ENCODE measurements at regions of chr17 and their contacts with region 1.

Region 1: GRCh38 chr17:41688699-41689496 is at the start of gene EIF1:
- DNase-seq: peak; percentile 99

Region 2: DNA sequence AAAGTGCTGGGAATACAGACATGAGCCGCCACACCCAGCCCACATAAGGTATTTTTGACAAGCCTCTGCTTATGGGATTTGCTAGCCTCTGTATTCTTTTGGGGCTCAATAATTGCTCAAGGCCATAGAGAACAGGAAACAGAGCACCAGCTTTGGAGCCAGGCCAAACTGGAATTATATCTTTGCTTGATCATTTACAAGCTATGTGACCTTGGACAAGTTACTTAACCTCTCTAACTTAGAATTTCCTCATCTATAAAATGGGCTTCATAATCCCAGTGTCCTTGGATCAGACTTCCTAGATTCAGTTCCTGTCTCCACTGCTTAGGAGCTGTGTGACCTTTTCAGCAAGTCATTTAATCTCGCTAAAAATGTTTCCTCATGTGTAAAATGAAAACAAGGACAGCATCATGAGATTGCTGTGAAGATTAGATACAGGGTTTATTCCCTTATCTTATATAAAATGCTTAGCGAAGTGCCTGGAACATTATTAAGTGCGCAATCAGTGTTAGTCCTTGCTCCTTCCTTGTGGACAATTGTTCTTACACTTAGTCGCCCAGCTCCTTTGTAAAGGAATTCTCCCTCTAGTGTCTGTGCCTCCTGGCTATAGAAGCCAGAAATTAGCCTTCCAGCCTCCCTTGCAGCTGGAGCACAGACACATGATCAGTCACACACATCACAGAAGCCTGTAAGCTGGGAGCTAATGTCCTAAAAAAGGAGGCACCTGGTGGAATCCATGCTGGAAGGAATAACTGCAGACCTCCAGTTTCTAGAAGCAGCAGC is 133.6 kb before region 1 on chr17:
- CTCF ChIA-PET with region 1: no interaction called
- POLR2A ChIA-PET with region 1: no interaction called
- DNase-seq: no peak

Region 3: DNA sequence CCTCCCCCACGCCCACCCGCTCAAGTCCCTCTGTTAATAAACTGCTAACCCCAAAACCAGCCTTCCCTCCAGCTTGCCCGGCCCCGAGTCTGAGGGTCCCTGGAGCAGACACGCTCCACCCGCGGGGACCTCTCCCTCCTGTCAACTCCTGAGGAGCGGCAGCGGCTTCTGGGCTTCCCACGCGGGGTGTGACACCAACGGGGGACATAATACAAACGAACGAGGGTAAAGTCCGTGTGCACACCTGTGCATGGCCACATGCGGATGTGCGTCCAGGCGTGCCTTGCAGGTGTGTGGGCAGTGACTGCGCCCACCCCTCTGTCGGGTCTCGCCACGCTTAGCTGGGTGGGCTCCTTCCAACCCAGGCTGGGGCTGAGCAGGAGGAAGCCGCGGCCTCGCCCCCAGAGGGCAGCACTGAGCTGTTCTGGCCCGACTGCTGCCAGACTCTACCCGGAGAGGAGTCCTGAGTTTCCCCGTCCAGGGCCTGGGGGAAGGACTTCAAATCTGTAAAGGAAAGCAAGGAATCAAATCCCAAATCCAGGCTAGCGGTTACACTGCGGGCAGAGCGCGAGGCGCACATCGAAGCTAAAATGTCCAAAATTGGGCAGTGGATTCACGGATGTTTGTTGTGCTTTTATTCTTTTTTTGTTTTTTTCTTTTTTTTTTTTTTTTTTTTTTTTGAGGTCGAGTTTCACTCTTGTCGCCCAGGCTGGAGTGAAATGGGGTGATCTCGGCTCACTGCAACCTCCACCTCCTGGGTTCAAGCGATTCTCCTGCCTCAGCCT is 40.3 kb before region 1 on chr17:
- CTCF ChIA-PET with region 1: interaction called, 5 read pairs
- POLR2A ChIA-PET with region 1: interaction called, 28 read pairs
- DNase-seq: peak; percentile 88

Region 4: DNA sequence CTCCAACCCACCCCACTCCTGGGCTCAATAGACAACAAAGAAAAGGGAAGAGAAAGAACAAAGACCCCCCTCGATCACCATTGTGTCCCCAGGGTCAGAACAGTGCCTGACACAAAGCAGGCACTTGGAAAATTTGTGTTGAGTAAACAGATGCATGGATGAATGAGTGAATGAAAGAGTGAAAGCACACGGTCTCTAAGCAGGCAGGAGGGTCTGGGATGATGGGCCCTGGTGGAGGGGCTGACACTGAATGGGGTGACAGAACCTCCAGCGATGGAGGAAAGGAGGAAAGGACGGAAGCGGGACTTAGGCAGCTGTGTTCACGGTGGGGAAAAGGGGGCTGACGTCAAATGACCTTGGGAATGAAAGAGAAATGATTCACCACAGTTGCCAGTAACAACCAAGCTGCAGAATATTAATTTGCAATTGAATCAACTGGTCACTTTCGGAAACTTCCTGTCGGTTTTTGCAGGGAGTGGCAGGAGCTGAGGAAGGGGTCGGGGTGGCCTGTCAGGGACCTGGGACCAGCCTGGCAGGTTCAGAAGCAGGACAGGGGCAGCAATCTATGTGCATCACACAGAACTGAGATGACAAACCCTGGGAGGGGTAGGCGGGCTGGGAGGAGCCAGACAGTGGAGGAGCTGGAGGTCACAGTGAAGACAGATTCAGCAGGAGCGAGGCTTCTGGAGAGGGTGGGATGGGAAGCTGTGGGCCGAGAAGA is 16.5 kb after region 1 on chr17:
- CTCF ChIA-PET with region 1: interaction called, 13 read pairs
- POLR2A ChIA-PET with region 1: interaction called, 199 read pairs
- DNase-seq: no peak

Region 5: DNA sequence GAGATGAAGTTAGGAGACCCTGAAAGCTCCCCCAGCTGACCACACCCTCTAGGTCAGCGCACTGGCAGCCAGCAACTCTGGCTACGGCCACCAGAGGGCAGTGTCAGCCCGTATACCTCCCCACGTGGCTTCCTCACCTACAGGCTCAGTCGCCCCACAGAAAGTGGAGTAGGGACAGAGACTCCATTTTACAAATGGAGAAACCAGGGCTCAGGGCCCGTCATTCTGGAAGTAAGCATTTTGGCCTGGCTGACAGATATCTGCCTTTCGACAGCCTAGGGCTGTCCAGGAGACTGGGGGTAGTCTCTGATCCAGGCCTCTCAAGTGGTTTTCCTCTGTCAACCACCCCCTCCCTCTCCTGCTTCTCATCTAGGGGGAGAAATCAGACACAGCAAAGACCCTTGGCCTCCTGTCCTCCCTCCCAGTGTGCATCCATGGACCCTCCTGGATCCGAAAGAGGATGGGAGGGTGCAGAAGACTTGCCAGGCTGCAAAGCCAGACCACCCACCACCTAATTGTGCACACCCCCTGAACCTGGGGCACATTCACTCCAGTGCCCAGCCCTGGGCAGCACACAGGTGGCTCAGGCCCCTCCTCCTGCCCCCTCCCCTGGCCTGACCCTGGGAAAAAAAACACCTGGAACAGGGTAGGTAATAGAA is 49.3 kb after region 1 on chr17:
- CTCF ChIA-PET with region 1: interaction called, 3 read pairs
- POLR2A ChIA-PET with region 1: interaction called, 20 read pairs
- DNase-seq: peak; percentile 90

Region 6: DNA sequence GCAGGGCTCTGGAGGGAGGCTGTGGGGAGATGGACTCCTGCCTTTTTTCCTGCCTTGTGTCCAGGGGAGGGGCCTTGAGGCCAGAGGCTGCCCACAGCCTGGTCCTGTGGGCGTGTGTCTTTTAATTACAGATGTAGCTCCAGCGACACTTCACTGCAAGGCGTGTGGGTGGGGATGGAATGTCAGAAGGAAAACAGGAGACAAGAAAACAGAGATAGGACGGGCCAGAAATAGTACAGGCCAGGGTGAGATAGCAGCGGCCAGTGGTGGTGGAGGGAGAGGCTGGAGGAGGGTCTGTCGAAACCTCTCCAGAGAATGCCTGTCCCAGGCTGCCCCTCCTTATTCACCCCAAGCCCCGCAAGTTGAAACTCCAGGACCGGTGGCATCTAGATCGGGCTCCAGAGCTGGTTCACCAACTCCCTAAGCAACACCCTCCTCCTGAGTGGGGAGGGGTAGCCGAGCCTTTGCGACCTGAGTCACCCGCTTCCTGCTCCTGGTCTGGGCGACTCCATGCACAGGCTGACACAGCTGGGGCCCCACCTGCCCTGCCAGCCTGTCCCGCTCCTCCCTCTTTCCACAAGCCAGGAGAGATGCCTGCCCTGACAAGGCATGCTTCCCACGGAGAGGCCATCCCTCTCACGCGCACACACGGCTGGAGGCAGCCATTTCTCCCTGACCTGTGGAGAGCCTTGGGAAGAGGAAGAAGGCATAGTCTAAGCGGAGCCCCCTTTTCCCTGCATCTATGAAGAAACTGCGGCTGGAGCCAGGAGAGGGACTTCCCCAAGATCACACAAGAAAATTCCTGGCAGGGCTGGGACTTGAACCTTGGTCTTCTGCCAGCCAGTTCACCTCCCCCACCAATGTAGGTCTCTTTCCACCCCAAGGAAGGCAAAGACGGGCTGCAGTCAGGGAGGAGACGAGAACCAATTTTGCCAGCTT is 104.2 kb after region 1 on chr17:
- CTCF ChIA-PET with region 1: interaction called, 8 read pairs
- POLR2A ChIA-PET with region 1: interaction called, 43 read pairs
- DNase-seq: no peak

Region 7: DNA sequence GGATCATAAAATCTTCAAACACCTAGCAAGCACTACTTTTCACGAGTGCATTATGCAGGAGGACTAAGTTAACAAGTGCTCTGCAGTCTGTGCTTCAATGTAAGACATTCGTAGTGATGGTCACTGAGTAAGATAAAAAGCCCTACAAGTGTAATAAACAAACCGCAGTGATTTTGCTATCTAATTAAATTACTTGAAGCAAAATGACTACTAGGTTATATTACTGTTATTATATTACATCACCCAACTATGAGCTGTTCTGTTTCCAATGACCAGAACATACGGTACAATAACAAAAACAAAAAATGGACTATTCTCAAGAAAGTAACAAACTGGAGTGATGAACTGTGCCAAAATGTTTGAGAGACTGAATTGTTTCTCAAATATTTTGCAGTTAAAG is 159.9 kb after region 1 on chr17:
- CTCF ChIA-PET with region 1: interaction called, 4 read pairs
- POLR2A ChIA-PET with region 1: interaction called, 11 read pairs
- DNase-seq: no peak

Region 8: DNA sequence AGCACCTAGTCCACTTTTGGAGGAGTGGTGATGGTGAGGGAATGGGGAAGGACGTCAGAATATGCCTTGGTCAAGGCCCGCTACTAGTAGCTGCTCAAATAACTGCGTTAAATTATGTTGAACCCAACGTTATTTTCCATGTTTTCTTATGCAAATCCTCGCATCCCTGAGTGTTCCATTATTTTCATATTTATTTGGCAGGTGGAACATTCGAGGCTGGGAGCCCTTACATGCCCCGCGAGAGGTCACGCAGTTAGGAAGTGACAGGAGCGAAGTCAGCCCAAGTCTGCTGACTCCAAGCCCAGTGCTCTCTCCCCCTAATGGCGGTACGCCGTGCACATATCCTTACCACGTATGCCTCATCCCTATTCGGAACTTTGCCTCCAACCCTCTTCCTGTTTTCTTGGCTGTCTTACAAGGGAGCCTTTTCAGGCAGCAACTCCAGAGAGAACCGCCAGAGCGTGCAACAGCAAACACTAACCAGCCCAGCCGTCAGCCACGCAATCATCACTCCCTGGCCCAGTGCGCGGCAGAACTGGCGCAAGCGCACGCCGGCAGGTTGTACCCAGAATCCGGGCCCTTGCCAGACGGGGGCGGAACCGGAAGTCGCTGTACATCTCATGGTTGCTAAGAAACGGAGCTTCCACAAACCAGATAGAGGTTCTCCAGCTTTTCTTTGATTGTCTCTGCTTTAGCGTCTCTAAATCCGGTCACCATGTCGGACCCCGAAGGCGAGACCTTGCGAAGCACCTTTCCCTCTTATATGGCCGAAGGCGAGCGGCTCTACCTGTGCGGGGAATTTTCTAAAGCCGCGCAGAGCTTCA is 241.3 kb after region 1 on chr17 and contains the start of gene ODAD4:
- CTCF ChIA-PET with region 1: interaction called, 5 read pairs
- POLR2A ChIA-PET with region 1: interaction called, 27 read pairs
- DNase-seq: peak; percentile 99

Measured in HEK293T (cell line).